Activated CD4-positive, alpha-beta memory T cell treated with anti-CD3 and anti-CD28 coated beads for 36 hours (primary cell): ENCODE measurements at regions of chr1 and their contacts with region 1.

Region 1: DNA sequence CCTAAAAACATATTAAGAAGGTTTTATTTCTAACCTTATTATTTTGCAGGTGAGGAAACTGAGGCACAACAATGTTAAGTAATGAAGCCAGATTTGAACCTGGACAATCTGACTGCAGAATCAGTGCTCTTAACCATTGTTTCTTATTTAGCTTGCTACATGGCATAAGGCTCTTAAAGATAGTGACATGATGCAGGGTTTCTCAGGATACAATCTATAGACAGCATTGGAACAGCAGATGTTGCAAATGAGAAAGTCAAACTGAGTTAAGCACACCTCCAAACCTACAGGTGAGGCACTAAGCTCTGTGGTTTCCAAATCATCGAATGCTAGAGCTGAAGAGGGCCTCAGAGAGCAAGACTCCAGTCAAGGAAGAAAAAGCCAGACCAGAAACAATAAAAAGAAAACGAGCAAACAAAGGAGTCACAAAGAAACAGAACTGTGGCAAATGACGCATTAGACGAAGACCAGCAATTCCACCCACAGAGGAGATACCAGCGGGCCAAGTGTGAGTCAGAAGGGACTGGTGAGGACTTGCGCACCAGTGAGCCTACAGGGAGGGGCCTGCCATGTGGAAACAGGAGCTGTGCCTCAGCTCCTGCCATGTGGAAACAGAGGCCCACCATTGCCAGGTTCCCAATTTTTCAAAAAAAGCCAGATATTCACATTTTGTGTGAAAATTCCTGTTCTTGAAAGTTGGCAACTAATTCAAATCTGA is 14.4 kb downstream of the CD58 start:
- DNase-seq: peak; percentile 91
- H3K4me3 Mint-ChIP-seq: peak overlapping the region; percentile 9
- H3K27ac Mint-ChIP-seq: peak overlapping the region; percentile 91
- H3K4me1 Mint-ChIP-seq: peaks cover 80% of the 10 kb centered on the region
- H3K27me3 Mint-ChIP-seq: no peaks in the 10 kb centered on the region

Region 2: DNA sequence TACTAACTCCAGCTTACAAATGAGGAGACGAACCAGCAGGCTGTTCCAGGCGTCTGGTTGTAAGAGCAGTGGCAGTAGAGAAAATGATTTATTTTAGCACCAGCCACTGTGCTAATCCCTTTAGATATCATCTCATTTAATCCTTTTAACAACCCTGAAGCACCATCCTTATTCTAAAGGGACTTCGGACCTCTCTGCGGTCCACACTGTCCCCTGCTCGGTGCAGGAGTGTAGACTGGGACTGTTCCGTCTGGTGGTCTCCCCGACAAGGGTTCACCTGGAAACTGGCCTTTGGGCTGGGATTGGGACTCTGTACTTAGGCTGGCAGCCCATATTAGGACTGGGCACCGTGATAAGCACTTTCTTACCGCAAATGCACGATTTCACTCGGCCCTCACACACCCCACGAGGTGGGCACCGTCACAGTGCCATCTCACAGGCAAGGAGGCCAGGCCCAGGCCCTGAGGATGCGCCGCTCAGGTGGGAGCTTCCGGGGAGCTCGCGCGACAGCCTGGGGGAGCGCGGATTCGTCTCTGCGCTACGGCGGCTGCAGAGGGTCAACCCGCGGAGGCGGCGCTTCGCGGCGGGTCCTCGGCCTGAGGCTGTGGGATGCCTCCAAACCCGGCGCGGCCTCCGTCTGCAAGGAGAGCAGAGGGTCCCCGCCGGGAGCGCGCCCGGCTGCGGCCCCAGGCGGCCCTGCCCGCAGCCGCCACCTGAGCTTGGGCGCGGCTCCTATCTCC is 138.2 kb before region 1 on chr1:
- CTCF ChIA-PET with region 1: no interaction called
- POLR2A ChIA-PET with region 1: no interaction called
- intact Hi-C with region 1: loop called (anchors 2 kb)
- DNase-seq: peak; percentile 91
- H3K4me3 Mint-ChIP-seq: peak overlapping the region; percentile 87
- H3K27ac Mint-ChIP-seq: peak overlapping the region; percentile 75
- H3K4me1 Mint-ChIP-seq: peaks cover 32% of the 10 kb centered on the region
- H3K27me3 Mint-ChIP-seq: no peaks in the 10 kb centered on the region

Region 3: GRCh38 chr1:116433275-116434257 is 122.9 kb before region 1 on chr1:
- CTCF ChIA-PET with region 1: no interaction called
- POLR2A ChIA-PET with region 1: no interaction called
- intact Hi-C with region 1: no loop called
- DNase-seq: no peak
- H3K4me3 Mint-ChIP-seq: no peak overlapping the region
- H3K27ac Mint-ChIP-seq: no peak overlapping the region
- H3K4me1 Mint-ChIP-seq: no peaks in the 10 kb centered on the region
- H3K27me3 Mint-ChIP-seq: peaks cover 3% of the 10 kb centered on the region

Region 4: DNA sequence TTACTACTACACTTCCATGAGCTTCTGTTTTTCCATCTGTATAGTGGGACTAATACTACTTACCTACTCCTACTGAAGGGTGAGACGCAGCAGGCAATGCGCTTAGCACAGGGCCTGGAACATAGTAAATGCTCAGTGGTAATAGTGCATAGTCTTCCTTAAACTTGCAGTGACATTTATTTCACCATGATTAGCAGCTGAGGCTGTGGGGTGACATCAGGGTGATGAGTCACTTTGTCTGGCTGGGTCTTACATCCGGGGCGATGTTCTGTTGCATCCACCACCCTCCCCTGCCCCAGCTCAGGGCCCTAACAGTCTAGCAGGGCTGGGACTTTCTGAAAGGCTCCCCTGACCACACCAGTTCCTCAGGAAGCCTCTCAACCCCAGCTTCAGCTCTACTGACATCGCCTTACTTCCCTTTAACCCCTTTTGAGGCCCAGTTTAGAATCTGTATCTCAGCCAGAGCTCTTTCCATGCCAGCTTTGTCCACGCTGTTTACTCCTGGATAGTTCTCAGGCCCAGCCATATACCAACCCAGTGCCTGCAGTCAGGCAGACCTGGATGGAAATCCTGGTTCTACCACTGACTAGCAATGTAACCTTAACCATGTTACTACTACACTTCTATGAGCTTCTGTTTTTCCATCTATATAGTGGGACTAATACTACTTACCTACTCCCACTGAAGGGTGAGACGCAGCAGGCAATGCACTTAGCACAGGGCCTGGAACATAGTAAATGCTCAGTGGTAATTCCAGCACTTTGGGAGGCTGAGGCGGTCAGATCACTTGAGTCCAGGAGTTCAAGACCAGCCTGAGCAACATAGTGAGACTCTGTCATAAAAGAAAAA is 51.9 kb before region 1 on chr1:
- CTCF ChIA-PET with region 1: no interaction called
- POLR2A ChIA-PET with region 1: interaction called, 10 read pairs
- intact Hi-C with region 1: loop called (anchors 1 kb)
- DNase-seq: peak; percentile 92
- H3K4me3 Mint-ChIP-seq: peak overlapping the region; percentile 38
- H3K27ac Mint-ChIP-seq: peak overlapping the region; percentile 97
- H3K4me1 Mint-ChIP-seq: peaks cover 65% of the 10 kb centered on the region
- H3K27me3 Mint-ChIP-seq: no peaks in the 10 kb centered on the region

Region 5: DNA sequence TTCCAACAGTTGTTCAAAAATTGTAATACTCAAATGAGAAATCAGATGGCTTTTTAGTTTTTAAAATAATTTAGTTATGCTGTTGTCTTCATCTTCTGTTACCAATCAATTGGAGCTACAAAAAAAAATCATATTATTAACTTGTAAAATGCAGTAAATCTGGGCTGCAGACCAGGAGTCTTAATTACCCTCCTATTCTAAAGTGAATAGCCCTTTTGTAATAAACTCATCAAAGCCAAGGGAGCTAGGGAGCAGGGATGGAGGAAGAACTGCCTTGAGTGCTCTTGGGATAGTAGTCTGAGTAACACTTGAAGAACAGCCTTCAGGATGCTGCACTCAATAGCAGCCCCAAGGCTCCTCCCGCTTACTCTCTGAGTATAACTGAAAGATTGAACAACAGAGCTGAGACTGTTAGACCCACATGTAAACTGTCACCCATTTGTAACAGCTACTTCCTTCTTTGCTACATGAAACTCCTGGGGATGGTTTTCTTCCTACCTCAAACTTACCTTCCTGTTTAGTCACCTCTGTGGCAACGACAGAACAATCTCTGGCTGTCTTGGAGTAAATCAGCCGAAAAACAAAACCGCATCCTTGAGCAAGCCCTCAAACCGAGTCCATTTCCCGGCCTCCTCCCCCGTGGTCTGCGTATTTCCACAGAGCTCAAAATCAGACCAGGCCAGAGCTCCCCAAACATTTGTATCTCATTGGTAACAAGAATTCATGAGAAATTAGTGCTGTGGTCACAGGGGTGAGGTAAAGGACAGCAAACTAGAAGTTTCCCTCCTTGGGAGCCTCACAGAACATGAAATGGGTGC is 41.5 kb before region 1 on chr1:
- CTCF ChIA-PET with region 1: interaction called, 8 read pairs
- POLR2A ChIA-PET with region 1: interaction called, 10 read pairs
- intact Hi-C with region 1: loop called (anchors 1 kb)
- DNase-seq: peak; percentile 88
- H3K4me3 Mint-ChIP-seq: peak overlapping the region; percentile 55
- H3K27ac Mint-ChIP-seq: peak overlapping the region; percentile 96
- H3K4me1 Mint-ChIP-seq: peaks cover 63% of the 10 kb centered on the region
- H3K27me3 Mint-ChIP-seq: no peaks in the 10 kb centered on the region

Region 6: GRCh38 chr1:116538544-116538943 is 17.9 kb before region 1 on chr1:
- CTCF ChIA-PET with region 1: interaction called, 20 read pairs
- POLR2A ChIA-PET with region 1: interaction called, 10 read pairs
- intact Hi-C with region 1: loop called (anchors 1 kb)
- DNase-seq: peak; percentile 68
- H3K4me3 Mint-ChIP-seq: no peak overlapping the region
- H3K27ac Mint-ChIP-seq: peak overlapping the region; percentile 59
- H3K4me1 Mint-ChIP-seq: peaks cover 62% of the 10 kb centered on the region
- H3K27me3 Mint-ChIP-seq: no peaks in the 10 kb centered on the region

Region 7: GRCh38 chr1:116544588-116545358 is 11.7 kb before region 1 on chr1:
- CTCF ChIA-PET with region 1: interaction called, 20 read pairs
- POLR2A ChIA-PET with region 1: interaction called, 10 read pairs
- intact Hi-C with region 1: loop called (anchors 1 kb)
- DNase-seq: peak; percentile 61
- H3K4me3 Mint-ChIP-seq: peak overlapping the region; percentile 79
- H3K27ac Mint-ChIP-seq: peak overlapping the region; percentile 92
- H3K4me1 Mint-ChIP-seq: peaks cover 76% of the 10 kb centered on the region
- H3K27me3 Mint-ChIP-seq: no peaks in the 10 kb centered on the region

Region 8: DNA sequence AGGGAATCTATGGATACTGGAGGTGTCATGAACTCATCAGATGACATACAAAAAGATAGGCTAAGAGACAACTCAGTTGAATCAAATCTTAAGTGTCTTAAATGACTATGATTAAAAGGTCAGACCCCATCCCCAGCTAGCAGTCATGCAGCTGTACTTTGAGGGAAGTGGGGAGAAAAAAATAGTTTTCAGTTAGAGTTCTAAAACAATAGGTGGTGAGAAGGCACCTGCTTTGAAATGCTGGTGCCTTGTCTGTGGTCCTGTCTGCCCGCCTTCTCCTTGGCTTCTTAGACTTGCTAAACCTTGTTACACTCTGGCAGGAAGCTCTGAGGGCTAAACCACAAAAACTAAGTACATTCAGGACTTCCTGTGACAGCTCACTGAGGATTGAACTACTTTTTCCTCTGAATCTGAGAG is 213.1 kb after region 1 on chr1:
- CTCF ChIA-PET with region 1: no interaction called
- POLR2A ChIA-PET with region 1: interaction called, 6 read pairs
- intact Hi-C with region 1: loop called (anchors 2 kb)
- DNase-seq: peak; percentile 85
- H3K4me3 Mint-ChIP-seq: peak overlapping the region; percentile 99
- H3K27ac Mint-ChIP-seq: peak overlapping the region; percentile 99
- H3K4me1 Mint-ChIP-seq: peaks cover 95% of the 10 kb centered on the region
- H3K27me3 Mint-ChIP-seq: peaks cover 2% of the 10 kb centered on the region